GM10248 (cell line): ENCODE measurements at regions of chr5 and their contacts with region 1.

Region 1: DNA sequence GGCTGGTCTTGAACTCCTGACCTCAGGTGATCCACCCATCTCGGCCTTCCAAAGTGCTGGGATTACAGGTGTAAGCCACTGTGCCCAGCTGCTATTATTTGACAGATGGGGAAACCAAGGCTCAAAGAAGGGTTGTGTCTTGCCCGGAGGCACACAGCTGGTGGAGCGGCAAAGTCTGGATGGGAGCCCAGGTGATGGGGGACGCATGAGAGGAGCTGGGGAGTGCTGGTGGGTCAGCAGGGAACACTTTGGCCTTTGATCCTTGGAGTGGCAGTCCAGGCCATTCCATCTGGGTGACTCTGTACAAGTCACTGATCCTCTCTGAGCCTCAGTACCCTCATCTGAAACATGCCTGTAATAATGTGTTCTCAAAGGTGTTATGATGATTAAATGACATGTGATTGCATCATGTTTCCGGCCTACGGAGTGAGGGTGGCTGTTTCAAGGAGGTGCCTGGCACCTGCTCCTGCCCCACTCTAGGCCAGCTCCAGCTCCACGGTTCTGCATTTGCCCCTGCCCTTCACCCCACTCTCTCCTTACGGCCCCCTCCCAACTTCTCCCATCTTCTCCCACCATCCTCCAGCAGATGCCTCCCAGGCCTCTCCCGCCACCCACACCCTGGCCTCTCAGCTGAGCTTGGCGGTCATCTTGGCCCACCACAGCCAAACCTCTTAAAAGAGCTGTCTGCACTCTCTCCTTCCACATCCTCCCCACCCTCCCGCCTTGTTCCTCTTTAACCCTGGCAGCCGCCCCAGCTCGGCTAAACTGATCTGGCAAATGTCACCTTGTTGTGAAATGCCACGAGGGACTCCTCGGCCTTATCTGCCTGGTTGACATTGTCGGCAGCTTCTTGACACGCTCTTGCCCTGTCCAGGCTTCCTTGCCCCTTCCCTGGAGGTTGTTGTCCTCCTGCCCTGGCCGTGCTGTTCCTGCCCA is 5.5 kb upstream of the DBN1 start:
- DNase-seq: peak; percentile 35
- CTCF ChIP-seq: no peak

Region 2: GRCh38 chr5:177491429-177491945 is 12.5 kb after region 1 on chr5:
- CTCF ChIA-PET with region 1: interaction called, 15 read pairs
- POLR2A ChIA-PET with region 1: interaction called, 6 read pairs
- DNase-seq: peak; percentile 59
- CTCF ChIP-seq: peak; percentile 49

Region 3: GRCh38 chr5:177592010-177592834 is 113.2 kb after region 1 on chr5 and contains the start of gene TMED9:
- CTCF ChIA-PET with region 1: no interaction called
- POLR2A ChIA-PET with region 1: no interaction called
- DNase-seq: peak; percentile 94
- CTCF ChIP-seq: no peak